ENCODE measurements at regions of chr22 and their contacts with region 1.

Region 1: GRCh38 chr22:31526270-31526669 is 29.9 kb downstream of the SFI1 start:
- DNase-seq: no peak
- H3K4me3 Mint-ChIP-seq: no peak overlapping the region
- H3K27ac Mint-ChIP-seq: peak overlapping the region; percentile 96
- H3K4me1 Mint-ChIP-seq: peaks cover 58% of the 10 kb centered on the region
- H3K27me3 Mint-ChIP-seq: no peaks in the 10 kb centered on the region

Region 2: GRCh38 chr22:31489604-31490495 is 36.4 kb before region 1 on chr22 and contains the start of gene EIF4ENIF1:
- intact Hi-C with region 1: loop called (anchors 2 kb)
- DNase-seq: peak; percentile 82
- H3K4me3 Mint-ChIP-seq: peak within 1 kb of the TSS; percentile 98
- H3K27ac Mint-ChIP-seq: peak within 1 kb of the TSS; percentile 99
- H3K4me1 Mint-ChIP-seq: peaks cover 47% of the 10 kb centered on the region
- H3K27me3 Mint-ChIP-seq: no peaks in the 10 kb centered on the region
- total RNA-seq, gene EIF4ENIF1: 96.5 and 103 TPM in 2 replicates

Region 3: DNA sequence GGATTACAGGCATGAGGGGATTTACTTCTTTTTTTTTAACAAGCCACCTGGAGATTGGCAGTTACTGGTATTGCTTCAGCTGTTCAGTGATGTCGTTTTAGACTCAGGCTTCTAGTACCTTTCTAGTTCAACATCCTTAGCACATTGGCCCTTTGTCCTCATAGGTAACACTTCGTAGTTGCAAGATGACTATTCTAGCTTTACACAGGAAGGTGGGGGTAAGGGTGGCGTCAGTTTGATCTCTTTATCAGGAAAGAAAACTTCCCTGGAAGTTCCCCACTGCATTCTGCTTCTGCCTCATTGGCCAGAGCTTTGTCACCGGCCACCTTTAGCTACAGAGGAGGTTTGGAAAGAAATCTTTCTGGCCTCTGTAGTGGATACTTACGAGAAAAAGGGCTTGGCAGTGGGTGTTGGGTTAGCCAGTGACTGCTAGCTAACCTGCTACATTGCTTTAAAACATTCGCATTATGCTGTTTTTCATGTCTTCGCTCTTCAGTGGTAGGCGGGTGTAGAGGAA is 10.8 kb after region 1 on chr22:
- intact Hi-C with region 1: loop called (anchors 1 kb)
- DNase-seq: peak; percentile 26
- H3K4me3 Mint-ChIP-seq: peak overlapping the region; percentile 64
- H3K27ac Mint-ChIP-seq: peak overlapping the region; percentile 99
- H3K4me1 Mint-ChIP-seq: peaks cover 60% of the 10 kb centered on the region
- H3K27me3 Mint-ChIP-seq: no peaks in the 10 kb centered on the region

Region 4: GRCh38 chr22:31585161-31585859 is 59.0 kb after region 1 on chr22:
- intact Hi-C with region 1: loop called (anchors 1 kb)
- DNase-seq: peak; percentile 20
- H3K4me3 Mint-ChIP-seq: peak overlapping the region; percentile 20
- H3K27ac Mint-ChIP-seq: peak overlapping the region; percentile 81
- H3K4me1 Mint-ChIP-seq: peaks cover 51% of the 10 kb centered on the region
- H3K27me3 Mint-ChIP-seq: no peaks in the 10 kb centered on the region

Region 5: DNA sequence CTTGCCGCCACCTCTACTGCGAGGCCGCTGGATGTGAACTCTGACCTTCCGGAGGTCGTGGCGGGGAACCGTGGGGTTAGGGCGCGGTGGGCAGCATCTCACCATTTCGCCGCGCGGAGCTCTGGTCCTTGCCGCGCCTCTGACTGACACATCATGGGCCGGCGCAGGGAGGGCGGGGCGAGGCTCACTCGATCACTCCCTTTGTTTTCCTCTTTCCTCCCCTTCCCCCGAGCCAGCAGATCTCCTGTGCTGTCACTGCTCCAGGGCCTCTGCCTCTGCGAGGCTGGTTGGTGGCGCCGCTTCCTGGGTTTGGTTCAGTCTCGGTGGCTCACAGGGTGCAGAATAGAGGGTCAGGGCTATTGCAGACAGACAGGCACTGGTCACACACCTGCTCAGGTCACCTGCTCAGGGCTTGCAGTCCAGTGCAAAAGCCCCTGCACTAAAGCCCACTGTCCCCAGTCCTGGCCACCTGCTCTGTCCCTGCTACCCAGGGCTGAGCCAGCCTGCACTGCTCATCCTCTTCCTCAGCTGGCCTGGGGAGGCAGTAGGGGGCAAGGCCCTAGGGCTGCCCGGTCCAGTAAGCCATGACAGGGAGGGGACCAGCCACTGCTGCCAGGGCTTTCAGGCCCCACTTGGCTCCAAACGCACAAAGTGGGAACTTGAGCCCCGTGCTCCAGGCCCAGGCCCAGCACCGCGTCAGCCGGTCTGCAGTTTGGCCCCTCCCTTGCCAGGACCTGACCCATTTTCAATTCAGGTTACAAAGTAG is 99.6 kb after region 1 on chr22:
- intact Hi-C with region 1: no loop called
- DNase-seq: no peak
- H3K4me3 Mint-ChIP-seq: no peak overlapping the region
- H3K27ac Mint-ChIP-seq: peak overlapping the region; percentile 58
- H3K4me1 Mint-ChIP-seq: peaks cover 22% of the 10 kb centered on the region
- H3K27me3 Mint-ChIP-seq: no peaks in the 10 kb centered on the region

Region 6: GRCh38 chr22:31749636-31750364 is 223.5 kb after region 1 on chr22 and contains the start of gene PRR14L:
- intact Hi-C with region 1: no loop called
- DNase-seq: peak; percentile 98
- H3K4me3 Mint-ChIP-seq: peak within 1 kb of the TSS; percentile 94
- H3K27ac Mint-ChIP-seq: peak within 1 kb of the TSS; percentile 91
- H3K4me1 Mint-ChIP-seq: peaks cover 50% of the 10 kb centered on the region
- H3K27me3 Mint-ChIP-seq: no peaks in the 10 kb centered on the region
- total RNA-seq, gene PRR14L: 54.2 and 58.0 TPM in 2 replicates